Naive thymus-derived CD8-positive, alpha-beta T cell (primary cell): ENCODE measurements at regions of chr1 and their contacts with region 1.

Region 1: GRCh38 chr1:155172732-155173477 is at the start of gene KRTCAP2:
- DNase-seq: peak; percentile 89 to 97 (median 92)
- ATAC-seq: peak; percentile 80 to 83
- H3K4me3 Mint-ChIP-seq: peak within 1 kb of the TSS; percentile 97 to 100 (median 99)
- H3K27ac Mint-ChIP-seq: peak within 1 kb of the TSS; percentile 98 to 100 (median 99)
- H3K4me1 Mint-ChIP-seq: peaks cover 26 to 54% (median 51%) of the 10 kb centered on the region in 4 donors
- H3K27me3 Mint-ChIP-seq: peaks cover 0 to 2% (median 0%) of the 10 kb centered on the region in 5 donors
- polyA plus RNA-seq, gene KRTCAP2: 453 to 495 (median 490) TPM

Region 2: GRCh38 chr1:155135415-155136028 is 37.4 kb before region 1 on chr1 and contains the start of gene SLC50A1:
- POLR2A ChIA-PET with region 1: interaction called, 21 read pairs
- DNase-seq: peak; percentile 83 to 93 (median 90)
- ATAC-seq: peak; percentile 83 to 84
- H3K4me3 Mint-ChIP-seq: peak within 1 kb of the TSS; percentile 95 to 100 (median 97)
- H3K27ac Mint-ChIP-seq: peak within 1 kb of the TSS; percentile 97 to 100 (median 99)
- H3K4me1 Mint-ChIP-seq: peaks cover 28 to 52% (median 49%) of the 10 kb centered on the region in 4 donors
- H3K27me3 Mint-ChIP-seq: peaks cover 0 to 2% (median 0%) of the 10 kb centered on the region in 5 donors
- polyA plus RNA-seq, gene SLC50A1: 50.3 to 72.7 (median 62.3) TPM

Region 3: DNA sequence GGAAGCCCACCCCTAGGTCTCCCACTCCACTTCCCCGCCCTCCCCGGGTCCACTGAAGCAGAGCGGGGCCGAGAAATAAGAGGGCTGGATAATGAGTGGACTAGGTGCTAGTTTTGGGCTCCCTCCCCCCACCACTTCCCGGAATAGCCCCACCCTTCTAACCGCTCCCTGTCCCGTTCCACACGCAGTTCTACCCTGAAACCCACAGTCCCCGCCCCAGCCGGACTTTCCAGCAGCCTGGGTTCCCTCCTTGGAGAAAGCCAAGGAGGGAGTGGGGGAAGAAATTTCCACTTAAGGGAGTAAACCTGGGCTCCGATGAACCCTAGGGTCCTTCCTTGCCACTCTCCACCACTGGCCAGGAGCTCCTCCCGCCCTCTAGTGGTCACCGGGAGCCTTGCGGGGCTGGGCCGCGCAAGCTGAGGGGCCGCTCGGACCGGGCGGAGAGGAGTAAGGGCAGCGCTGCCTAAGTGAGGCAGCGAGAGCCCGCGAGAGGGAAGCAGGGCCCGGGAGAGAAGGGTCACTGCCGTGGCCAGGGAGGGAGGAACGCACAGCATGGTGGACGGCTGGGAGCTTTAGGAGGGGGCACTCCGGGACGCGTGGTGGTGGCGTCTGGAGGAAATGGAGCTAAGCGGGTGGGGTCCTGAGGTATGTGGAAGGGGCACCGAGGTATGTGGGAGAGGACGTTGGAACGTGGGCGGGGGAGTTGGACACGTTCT is 20.5 kb after region 1 on chr1:
- POLR2A ChIA-PET with region 1: interaction called, 150 read pairs
- DNase-seq: peak; percentile 40 to 79 (median 60)
- ATAC-seq: peak; percentile 6 to 17
- H3K4me3 Mint-ChIP-seq: peak overlapping the region; percentile 77 to 97 (median 90)
- H3K27ac Mint-ChIP-seq: peak overlapping the region; percentile 93 to 100 (median 98)
- H3K4me1 Mint-ChIP-seq: peaks cover 18 to 33% (median 26%) of the 10 kb centered on the region in 4 donors
- H3K27me3 Mint-ChIP-seq: peaks cover 0 to 2% (median 0%) of the 10 kb centered on the region in 5 donors